AG04450 (cell line): ENCODE measurements at regions of chrX and their contacts with region 1.

Region 1: GRCh38 chrX:10189317-10190268 is 32.8 kb downstream of the CLCN4 start:
- DNase-seq: no peak
- H3K4me3 ChIP-seq: no peak overlapping the region
- H3K27ac ChIP-seq: no peak overlapping the region
- H3K27me3 ChIP-seq: no peaks in the 10 kb centered on the region
- CTCF ChIP-seq: peak; percentile 58

Region 2: GRCh38 chrX:10176121-10177003 is 13.2 kb before region 1 on chrX:
- CTCF ChIA-PET with region 1: interaction called, 11 read pairs
- POLR2A ChIA-PET with region 1: no interaction called
- DNase-seq: no peak
- H3K4me3 ChIP-seq: no peak overlapping the region
- H3K27ac ChIP-seq: no peak overlapping the region
- H3K27me3 ChIP-seq: no peaks in the 10 kb centered on the region
- CTCF ChIP-seq: no peak

Region 3: DNA sequence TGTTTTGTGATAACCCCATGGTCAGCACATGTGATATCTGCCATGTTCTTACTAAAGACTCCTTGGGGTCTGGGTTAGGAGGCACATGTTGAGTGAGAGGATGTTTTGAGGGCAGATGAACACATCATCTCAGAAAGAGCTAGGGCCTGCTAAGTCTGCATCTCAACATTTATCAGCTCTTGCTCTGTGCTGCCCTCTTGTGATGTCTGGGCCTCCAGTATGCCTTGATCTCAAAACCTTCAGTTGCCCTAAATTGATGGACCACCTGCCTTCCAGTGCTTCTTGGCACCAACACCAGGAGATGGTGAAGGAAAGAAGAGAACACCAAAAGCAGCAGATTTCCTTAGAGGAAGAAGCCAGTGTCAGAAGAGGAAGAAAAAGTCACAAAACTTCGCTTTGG is 408.3 kb after region 1 on chrX:
- CTCF ChIA-PET with region 1: interaction called, 11 read pairs
- POLR2A ChIA-PET with region 1: no interaction called
- DNase-seq: no peak
- H3K4me3 ChIP-seq: no peak overlapping the region
- H3K27ac ChIP-seq: no peak overlapping the region
- H3K27me3 ChIP-seq: no peaks in the 10 kb centered on the region
- CTCF ChIP-seq: peak; percentile 49

Region 4: DNA sequence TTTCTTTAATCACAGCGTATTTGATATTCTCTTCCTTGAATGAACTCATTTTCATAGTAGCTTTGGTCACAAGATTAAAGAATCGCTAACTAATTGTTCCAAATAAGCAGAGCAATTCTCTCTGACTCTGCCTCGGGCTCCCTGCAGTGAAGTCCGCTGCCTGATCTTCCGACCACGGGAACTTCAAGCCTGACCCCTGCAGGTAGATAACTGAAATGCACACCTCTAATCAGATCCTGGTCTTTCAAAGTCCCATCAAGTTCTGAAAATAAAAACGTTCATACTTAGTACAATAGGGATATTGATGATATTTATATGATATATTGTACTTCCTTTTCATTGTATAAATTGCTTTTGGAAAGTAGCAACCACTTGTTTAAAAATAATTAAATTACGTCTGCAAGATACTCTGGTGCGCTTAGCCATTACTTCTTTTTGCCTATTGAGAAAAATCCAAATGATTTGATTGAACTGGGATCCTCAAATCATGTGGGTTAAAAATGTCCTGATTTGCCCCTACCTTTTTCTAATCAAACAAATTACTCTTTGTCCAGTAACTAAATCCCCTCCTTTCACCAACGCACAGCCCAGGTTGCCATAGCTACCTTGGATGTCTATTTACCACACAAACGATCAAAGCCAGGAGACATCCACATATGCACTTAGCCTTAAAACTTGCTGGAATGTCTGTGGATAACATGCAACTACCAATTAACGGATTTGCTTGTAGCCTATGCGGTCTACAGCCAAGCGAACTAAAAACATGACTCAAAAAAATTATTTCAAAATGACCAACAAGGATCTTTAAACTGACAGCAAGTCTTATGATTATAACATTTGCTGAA is 426.6 kb after region 1 on chrX:
- CTCF ChIA-PET with region 1: interaction called, 28 read pairs
- POLR2A ChIA-PET with region 1: no interaction called
- DNase-seq: no peak
- H3K4me3 ChIP-seq: peak overlapping the region; percentile 31; the same call in 1 of the 2 replicates
- H3K27ac ChIP-seq: no peak overlapping the region
- H3K27me3 ChIP-seq: no peaks in the 10 kb centered on the region
- CTCF ChIP-seq: peak; percentile 62

Region 5: DNA sequence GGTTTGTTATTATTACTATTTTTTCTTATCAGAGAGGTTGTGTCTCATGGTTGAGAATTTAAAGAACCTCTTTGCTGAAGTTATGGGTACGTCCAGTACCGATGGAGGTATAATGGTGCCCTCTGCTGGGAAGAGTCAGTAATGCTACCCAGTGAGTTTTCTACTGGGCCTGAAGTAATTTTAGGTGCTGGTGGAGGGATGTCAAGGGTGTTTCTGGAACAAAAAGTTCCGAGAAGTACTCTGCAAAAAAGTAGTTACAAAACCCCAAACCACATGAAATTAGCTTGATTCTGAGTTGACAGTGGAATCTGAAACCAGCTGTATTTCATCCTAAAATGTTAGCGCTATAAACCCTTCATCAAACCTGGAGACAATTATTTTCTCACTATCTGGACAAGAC is 533.3 kb after region 1 on chrX:
- CTCF ChIA-PET with region 1: interaction called, 80 read pairs
- POLR2A ChIA-PET with region 1: no interaction called
- DNase-seq: peak; percentile 24
- H3K4me3 ChIP-seq: no peak overlapping the region
- H3K27ac ChIP-seq: no peak overlapping the region
- H3K27me3 ChIP-seq: no peaks in the 10 kb centered on the region
- CTCF ChIP-seq: peak; percentile 75

Region 6: GRCh38 chrX:11100281-11101035 is 910.9 kb after region 1 on chrX:
- CTCF ChIA-PET with region 1: interaction called, 19 read pairs
- POLR2A ChIA-PET with region 1: no interaction called
- DNase-seq: peak; percentile 52
- H3K4me3 ChIP-seq: no peak overlapping the region
- H3K27ac ChIP-seq: no peak overlapping the region
- H3K27me3 ChIP-seq: no peaks in the 10 kb centered on the region
- CTCF ChIP-seq: peak; percentile 50